T-cell (primary cell): ENCODE measurements at regions of chr10 and their contacts with region 1.

Region 1: GRCh38 chr10:114195079-114195478 is 15.9 kb downstream of the TDRD1 start:
- DNase-seq: no peak
- ATAC-seq: no peak
- H3K4me3 ChIP-seq: no peak overlapping the region
- H3K4me3 Mint-ChIP-seq: no peak overlapping the region
- H3K27ac ChIP-seq: no peak overlapping the region
- H3K27ac Mint-ChIP-seq: no peak overlapping the region
- H3K4me1 ChIP-seq: no peaks in the 10 kb centered on the region
- H3K4me1 Mint-ChIP-seq: peaks cover 0 to 7% (median 3%) of the 10 kb centered on the region in 3 donors
- H3K27me3 ChIP-seq: peaks cover 0 to 16% of the 10 kb centered on the region in 2 experiments
- H3K27me3 Mint-ChIP-seq: peaks cover 16 to 43% of the 10 kb centered on the region in 2 donors

Region 2: DNA sequence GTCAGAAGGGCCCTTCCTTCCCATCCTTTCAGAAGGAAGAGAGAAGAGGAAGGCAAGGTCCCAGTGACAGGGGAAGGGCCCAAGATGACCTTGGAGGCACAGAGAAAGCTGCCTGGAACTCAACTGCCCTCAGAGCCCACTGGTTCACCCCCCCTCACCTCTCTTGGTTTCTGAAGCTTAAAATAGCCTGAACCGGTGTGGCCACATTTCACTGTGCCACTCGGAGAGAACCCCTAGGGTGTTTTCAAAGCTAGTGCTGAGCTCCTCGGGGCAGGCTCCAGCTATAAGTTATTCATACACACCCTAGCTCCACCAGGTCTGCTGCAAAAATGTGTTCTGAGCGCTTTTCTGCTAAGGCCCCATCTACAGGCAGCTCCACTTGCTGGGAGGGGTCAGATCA is 212.3 kb before region 1 on chr10:
- CTCF ChIA-PET with region 1: no interaction called
- POLR2A ChIA-PET with region 1: no interaction called
- DNase-seq: no peak
- ATAC-seq: no peak
- H3K4me3 ChIP-seq: no peak overlapping the region
- H3K4me3 Mint-ChIP-seq: no peak overlapping the region
- H3K27ac ChIP-seq: no peak overlapping the region
- H3K27ac Mint-ChIP-seq: no peak overlapping the region
- H3K4me1 ChIP-seq: peaks cover 7 to 15% of the 10 kb centered on the region in 2 experiments
- H3K4me1 Mint-ChIP-seq: peaks cover 13 to 17% (median 14%) of the 10 kb centered on the region in 3 donors
- H3K27me3 ChIP-seq: peaks cover 0 to 2% of the 10 kb centered on the region in 2 experiments
- H3K27me3 Mint-ChIP-seq: no peaks in the 10 kb centered on the region

Region 3: DNA sequence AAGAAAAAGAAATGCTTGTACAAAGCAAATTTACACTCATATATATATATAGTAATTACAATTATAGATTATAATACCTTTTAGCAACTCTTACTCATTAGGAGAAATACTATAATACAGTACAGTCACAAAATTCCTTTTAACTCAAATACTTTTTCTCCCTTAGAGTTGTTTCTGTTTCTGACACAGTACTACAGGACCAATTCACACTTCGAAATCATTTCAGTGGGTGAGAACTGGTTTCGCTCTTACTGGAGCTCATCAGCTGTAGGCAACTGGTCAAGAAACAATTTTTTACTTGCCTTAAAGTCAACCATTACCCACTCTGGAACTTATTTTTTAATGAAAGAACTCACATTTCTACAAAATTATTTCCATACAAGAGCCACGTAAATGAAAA is 27.1 kb before region 1 on chr10:
- CTCF ChIA-PET with region 1: no interaction called
- POLR2A ChIA-PET with region 1: interaction called in 1 of 2 experiments, 10 read pairs
- DNase-seq: no peak
- ATAC-seq: no peak
- H3K4me3 ChIP-seq: no peak overlapping the region
- H3K4me3 Mint-ChIP-seq: no peak overlapping the region
- H3K27ac ChIP-seq: no peak overlapping the region
- H3K27ac Mint-ChIP-seq: no peak overlapping the region
- H3K4me1 ChIP-seq: peaks cover 4 to 16% of the 10 kb centered on the region in 2 experiments
- H3K4me1 Mint-ChIP-seq: peaks cover 65 to 75% (median 68%) of the 10 kb centered on the region in 3 donors
- H3K27me3 ChIP-seq: no peaks in the 10 kb centered on the region
- H3K27me3 Mint-ChIP-seq: no peaks in the 10 kb centered on the region

Region 4: GRCh38 chr10:114404171-114405010 is 209.3 kb after region 1 on chr10 and contains the start of gene AFAP1L2:
- CTCF ChIA-PET with region 1: no interaction called
- POLR2A ChIA-PET with region 1: no interaction called
- DNase-seq: no peak
- ATAC-seq: peak in 1 of 4 experiments; percentile 35
- H3K4me3 ChIP-seq: peak within 1 kb of the TSS in 1 of 2 donors; percentile 15
- H3K4me3 Mint-ChIP-seq: peak within 1 kb of the TSS in 1 of 3 donors; percentile 62
- H3K27ac ChIP-seq: no peak within 1 kb of the TSS
- H3K27ac Mint-ChIP-seq: no peak within 1 kb of the TSS
- H3K4me1 ChIP-seq: peaks cover 0 to 14% of the 10 kb centered on the region in 2 experiments
- H3K4me1 Mint-ChIP-seq: peaks cover 11 to 14% (median 14%) of the 10 kb centered on the region in 3 donors
- H3K27me3 ChIP-seq: peaks cover 7 to 42% of the 10 kb centered on the region in 2 experiments
- H3K27me3 Mint-ChIP-seq: peaks cover 53 to 67% of the 10 kb centered on the region in 2 donors
- total RNA-seq, gene AFAP1L2: 1.0 to 3.8 (median 2.1) TPM

Region 5: GRCh38 chr10:115239761-115240160 is 1044.7 kb after region 1 on chr10:
- CTCF ChIA-PET with region 1: no interaction called
- POLR2A ChIA-PET with region 1: interaction called in 1 of 2 experiments, 16 read pairs
- DNase-seq: no peak
- ATAC-seq: no peak
- H3K4me3 ChIP-seq: no peak overlapping the region
- H3K4me3 Mint-ChIP-seq: no peak overlapping the region
- H3K27ac ChIP-seq: no peak overlapping the region
- H3K27ac Mint-ChIP-seq: no peak overlapping the region
- H3K4me1 ChIP-seq: no peaks in the 10 kb centered on the region
- H3K4me1 Mint-ChIP-seq: no peaks in the 10 kb centered on the region
- H3K27me3 ChIP-seq: no peaks in the 10 kb centered on the region
- H3K27me3 Mint-ChIP-seq: no peaks in the 10 kb centered on the region